Left colon (tissue), 2 donors: ENCODE measurements at regions of chr7 and their contacts with region 1.

Region 1: DNA sequence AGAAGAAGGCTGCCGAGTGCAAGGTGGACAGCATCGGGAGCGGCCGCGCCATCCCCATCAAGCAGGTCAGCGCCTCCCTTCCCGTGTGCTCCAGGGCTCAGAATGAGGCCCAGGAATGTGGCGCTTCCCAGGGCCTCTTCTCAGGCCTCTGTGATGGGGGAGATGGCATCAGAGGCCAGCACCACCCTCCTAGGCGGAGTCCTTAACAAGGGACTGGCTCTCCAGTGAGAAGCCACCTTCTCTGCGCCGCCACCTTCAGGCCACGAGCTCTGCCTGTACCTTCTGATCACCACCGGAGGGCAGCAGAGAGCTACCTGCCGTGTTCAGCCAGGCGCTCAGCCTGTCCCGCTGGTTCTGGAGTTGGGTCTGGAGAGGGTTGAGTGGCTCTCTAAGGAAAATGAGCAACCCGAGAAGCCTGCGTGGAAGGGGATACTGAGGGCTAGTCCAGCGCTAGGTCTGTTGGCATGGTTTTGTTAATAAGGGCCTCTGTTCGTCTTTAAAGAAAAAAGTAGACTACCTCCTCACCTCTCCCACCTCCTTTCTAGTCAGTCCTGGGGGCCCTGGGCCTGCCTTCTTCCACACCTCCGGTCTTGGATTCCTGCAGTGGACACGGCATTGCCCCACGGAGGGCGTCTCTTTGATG is 37.7 kb downstream of the AGAP3 start:
- DNase-seq: peak; percentile 78 to 87
- ATAC-seq: peak; percentile 57

Region 2: DNA sequence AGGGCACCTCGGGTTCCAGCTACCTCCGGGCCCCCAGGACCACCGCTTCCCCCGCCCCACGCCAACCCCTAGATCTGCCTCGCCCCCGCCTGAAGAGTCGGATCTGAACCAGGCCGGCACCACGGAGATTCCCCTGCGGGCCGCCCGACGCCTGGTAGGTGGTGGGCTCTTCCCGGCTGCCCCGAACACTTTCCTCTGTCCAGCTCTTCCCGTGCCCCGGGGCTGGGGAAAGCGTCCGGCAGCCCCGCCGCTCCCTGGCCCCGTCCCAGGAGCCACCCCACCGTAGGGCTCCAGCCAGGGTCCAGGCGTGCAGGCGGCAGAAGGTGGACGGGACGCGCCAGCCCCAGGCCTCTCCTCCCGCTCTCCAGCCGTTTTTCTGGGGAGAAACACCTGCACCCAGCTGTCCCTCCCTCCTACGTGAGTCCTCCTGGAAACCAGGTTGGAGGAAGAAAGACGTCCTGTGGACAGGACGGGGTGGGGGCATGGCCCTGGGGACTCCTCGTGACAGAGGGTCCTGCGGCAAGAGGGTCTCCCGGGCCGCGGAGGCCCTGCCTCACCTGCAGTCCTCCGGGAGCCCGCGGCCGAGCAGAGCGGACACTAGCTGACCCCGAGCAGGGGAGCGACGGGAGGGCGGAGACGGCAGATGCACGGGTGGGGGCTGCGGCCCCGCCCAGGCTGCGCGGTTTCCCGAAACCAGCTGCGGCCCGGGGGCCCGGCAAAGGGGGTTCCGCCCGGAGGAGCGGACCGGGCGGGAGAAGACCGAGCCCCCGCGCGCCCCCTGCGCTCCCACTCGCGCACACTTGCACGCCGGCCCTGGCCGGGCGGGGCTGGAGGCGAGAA is 324.0 kb before region 1 on chr7 and contains the start of gene TMEM176B:
- intact Hi-C with region 1: no loop called
- DNase-seq: peak; percentile 73 to 79
- ATAC-seq: peak; percentile 68
- total RNA-seq, gene TMEM176B: 173 to 355 TPM

Region 3: GRCh38 chr7:151172273-151173141 is 48.6 kb after region 1 on chr7:
- intact Hi-C with region 1: loop called (anchors 2 to 5 kb)
- DNase-seq: peak in 1 of 2 donors; percentile 77
- ATAC-seq: peak; percentile 76

Region 4: GRCh38 chr7:151368136-151368571 is 244.2 kb after region 1 on chr7:
- intact Hi-C with region 1: no loop called
- DNase-seq: peak; percentile 80 to 89
- ATAC-seq: peak; percentile 98